Gastrocnemius medialis (tissue), 4 donors: ENCODE measurements at regions of chr2 and their contacts with region 1.

Region 1: DNA sequence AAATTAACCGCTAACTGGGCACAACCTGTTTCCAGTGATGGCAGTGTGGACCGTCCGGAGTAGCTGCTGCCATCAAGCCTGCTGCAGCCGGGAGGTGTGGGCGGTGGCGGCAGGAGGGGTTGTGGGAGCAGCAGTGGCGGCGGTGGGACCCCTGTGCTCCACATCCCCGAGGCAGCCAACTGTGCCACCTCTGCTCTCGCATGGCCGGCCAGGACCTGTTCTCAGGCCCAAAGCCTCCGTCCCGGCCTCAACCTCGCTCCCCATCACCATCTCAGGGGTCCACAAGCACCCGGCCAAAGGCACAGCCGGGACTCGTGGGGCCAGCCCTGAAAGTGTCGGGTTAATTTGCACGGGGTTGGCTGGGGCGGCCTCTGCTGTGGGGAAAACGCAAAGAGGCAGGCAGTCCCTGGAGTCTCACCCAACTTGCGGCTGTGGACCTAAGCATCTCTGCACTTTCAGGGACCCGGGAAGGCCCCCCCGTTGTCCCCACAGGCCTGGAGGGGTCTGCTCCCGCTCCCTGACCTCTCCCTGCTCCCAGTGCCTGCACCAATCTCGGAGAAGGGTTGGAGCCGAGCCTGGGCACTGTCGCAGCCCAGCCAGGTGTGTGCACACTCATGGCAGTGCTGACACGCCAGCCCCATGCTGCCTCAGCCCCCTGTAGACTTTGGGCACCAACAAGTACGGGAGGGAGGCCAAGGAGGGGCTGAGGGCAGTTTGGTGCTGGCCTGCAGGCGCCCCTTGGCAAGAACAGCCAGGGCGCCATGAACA is 44.4 kb upstream of the PEX13 start:
- DNase-seq: no peak
- ATAC-seq: no peak
- H3K4me3 ChIP-seq: no peak overlapping the region
- H3K27ac ChIP-seq: no peak overlapping the region
- H3K4me1 ChIP-seq: no peaks in the 10 kb centered on the region
- H3K27me3 ChIP-seq: no peaks in the 10 kb centered on the region
- CTCF ChIP-seq: no peak
- POLR2A ChIP-seq: no peak

Region 2: GRCh38 chr2:60945341-60945740 is 27.7 kb before region 1 on chr2:
- in situ Hi-C with region 1: no loop called
- intact Hi-C with region 1: loop called (anchors 1 kb)
- DNase-seq: no peak
- ATAC-seq: no peak
- H3K4me3 ChIP-seq: no peak overlapping the region
- H3K27ac ChIP-seq: no peak overlapping the region
- H3K4me1 ChIP-seq: no peaks in the 10 kb centered on the region
- H3K27me3 ChIP-seq: no peaks in the 10 kb centered on the region
- CTCF ChIP-seq: no peak
- POLR2A ChIP-seq: no peak

Region 3: DNA sequence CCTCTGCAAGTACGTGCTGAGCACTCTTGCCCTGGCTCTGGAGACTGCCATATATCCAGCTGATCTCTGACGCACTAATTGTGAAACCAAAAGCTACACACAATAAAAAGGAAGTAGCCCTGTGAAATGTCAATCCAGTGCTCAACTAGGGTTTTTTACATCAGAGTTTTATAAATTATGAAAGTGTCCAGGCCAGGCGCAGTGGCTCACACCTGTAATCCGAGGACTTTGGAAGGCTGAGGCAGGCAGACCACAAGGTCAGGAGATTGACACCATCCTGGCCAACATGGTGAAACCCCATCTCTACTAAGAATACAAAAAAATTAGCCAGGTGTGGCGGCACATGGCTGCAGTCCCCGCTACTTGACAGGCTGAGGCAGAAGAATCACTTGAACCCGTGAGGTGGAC is 19.9 kb after region 1 on chr2:
- in situ Hi-C with region 1: no loop called
- intact Hi-C with region 1: no loop called
- DNase-seq: no peak
- ATAC-seq: no peak
- H3K4me3 ChIP-seq: no peak overlapping the region
- H3K27ac ChIP-seq: peak overlapping the region in 1 of 4 donors; percentile 22
- H3K4me1 ChIP-seq: no peaks in the 10 kb centered on the region
- H3K27me3 ChIP-seq: no peaks in the 10 kb centered on the region
- CTCF ChIP-seq: no peak
- POLR2A ChIP-seq: peak in 1 of 2 donors; percentile 11